ENCODE measurements at regions of chr1 and their contacts with region 1.

Region 1: GRCh38 chr1:218345673-218346390 is 696 bp downstream of the TGFB2 start:
- DNase-seq: peak; percentile 83
- ATAC-seq: peak; percentile 85

Region 2: DNA sequence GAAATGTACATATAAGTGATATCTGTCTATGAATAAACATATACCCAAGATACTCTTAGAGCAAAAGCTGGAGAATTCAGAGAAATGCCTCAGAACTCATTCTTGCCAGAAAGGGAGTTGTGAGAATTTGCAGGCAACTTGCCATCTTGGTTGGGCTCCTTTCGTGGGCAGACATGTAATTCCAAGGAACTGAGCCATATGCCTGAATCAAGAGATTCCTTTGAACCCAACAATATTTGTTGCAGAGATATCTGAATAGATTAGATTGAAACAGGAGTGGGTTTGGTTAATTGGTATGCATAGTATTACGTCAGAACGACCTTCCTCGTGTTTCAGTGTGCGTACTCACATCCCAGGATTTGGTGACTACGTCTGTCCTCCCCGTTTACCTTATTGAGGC is 66.3 kb after region 1 on chr1:
- intact Hi-C with region 1: no loop called
- DNase-seq: no peak
- ATAC-seq: no peak

Region 3: DNA sequence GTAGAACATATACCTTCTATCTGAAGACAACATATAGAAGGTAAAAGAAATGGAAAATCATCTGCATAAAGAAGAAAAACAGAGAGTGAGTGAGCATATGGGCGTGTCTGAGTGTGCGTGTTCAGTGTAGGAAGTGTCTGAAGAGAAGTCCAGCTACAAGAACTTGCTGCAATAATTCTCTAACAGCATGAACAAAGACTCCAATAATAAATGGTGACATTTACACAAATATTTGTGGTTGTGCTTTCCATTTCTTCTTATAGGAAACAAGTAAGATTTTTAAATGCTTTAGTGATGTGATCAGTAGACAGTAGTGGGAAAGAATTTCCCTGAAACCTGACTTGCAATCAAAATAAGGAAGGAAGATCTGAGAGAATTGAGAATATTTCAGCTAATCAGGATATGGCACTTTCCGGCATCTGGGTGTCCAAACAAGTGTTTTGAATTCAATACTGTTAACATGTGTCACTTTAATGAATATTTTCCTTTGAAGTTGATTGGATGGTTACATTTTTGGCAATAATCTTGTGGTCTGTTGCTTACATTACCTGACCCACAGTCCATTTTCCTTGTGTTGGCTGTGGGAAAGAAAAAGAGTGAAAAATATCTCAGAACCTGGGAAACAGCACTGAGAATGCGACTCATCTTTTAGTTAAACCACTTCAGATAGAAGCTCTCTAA is 153.3 kb after region 1 on chr1:
- intact Hi-C with region 1: loop called (anchors 10 kb)
- DNase-seq: no peak
- ATAC-seq: peak; percentile 72

Region 4: GRCh38 chr1:219566951-219567947 is 1221.4 kb after region 1 on chr1:
- intact Hi-C with region 1: loop called (anchors 10 kb)
- DNase-seq: no peak
- ATAC-seq: peak; percentile 66